ENCODE measurements at regions of chr11 and their contacts with region 1.

Region 1: GRCh38 chr11:4636962-4637661 is at the start of gene OR51D1:
- DNase-seq: no peak
- H3K4me3 ChIP-seq: no peak within 1 kb of the TSS
- H3K27me3 ChIP-seq: no peaks in the 10 kb centered on the region
- CTCF ChIP-seq: peak; percentile 89
- polyA plus RNA-seq, gene OR51D1: not detected in 2 replicates

Region 2: DNA sequence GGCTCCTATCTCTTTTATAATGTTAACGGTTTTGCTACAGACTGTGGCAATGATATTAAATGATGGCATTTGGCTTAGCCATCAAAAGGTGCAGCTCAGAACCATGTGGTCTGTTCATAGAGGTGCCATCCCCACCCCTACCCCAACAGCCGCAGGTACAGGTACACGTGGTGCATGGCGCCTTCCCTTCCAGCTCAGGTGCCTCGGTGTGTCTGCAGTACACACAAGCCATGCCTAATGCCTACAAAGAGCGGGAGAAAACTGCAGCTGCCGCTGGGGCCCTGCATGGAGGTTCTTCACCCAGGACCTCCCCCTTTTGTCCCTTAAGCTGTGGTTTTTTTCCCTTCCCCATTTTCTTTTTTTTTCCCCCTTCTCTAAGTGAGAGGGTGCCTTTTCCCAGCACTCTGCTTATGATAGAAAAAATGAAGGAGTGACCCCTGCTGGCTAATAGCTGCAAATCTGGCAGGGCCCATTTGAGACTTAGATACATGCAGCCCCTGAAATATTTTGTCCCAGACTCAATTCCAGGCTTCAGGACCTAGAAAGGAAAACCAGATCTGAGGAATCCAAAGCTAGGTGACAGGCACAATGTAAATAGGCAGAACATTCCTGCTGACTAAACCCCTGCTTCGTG is 85.6 kb before region 1 on chr11:
- CTCF ChIA-PET with region 1: no interaction called
- POLR2A ChIA-PET with region 1: no interaction called
- DNase-seq: no peak
- H3K4me3 ChIP-seq: no peak overlapping the region
- H3K27me3 ChIP-seq: no peaks in the 10 kb centered on the region
- CTCF ChIP-seq: peak; percentile 39

Region 3: DNA sequence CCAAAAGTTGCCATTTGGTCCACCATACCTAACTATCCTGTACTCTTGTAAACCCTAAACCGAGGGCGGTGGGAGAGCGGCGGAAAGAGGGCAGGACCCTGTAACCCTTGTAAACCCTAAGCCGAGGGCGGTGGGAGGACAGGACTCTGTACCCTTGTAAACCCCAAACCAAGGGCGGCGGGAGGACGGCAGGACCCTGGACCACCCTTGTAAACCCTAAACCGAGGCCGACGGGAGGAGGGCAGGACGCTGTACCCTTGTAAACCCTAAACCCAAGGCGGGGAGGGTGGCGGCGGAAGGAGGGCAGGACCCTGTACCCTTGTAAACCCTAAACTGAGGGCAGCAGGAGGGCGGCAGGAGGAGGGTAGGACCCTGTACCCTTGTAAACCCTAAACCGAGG is 68.0 kb before region 1 on chr11:
- CTCF ChIA-PET with region 1: no interaction called
- POLR2A ChIA-PET with region 1: no interaction called
- DNase-seq: no peak
- H3K4me3 ChIP-seq: no peak overlapping the region
- H3K27me3 ChIP-seq: no peaks in the 10 kb centered on the region
- CTCF ChIP-seq: no peak

Region 4: GRCh38 chr11:4607781-4608666 is 29.1 kb before region 1 on chr11 and contains the start of gene TRIM68:
- CTCF ChIA-PET with region 1: interaction called, 16 read pairs
- POLR2A ChIA-PET with region 1: no interaction called
- DNase-seq: peak; percentile 75
- H3K4me3 ChIP-seq: peak within 1 kb of the TSS; percentile 61
- H3K27me3 ChIP-seq: no peaks in the 10 kb centered on the region; the same call in 1 of the 2 replicates
- CTCF ChIP-seq: no peak
- polyA plus RNA-seq, gene TRIM68: 6.2 and 6.5 TPM in 2 replicates

Region 5: GRCh38 chr11:4626207-4627099 is 10.7 kb before region 1 on chr11:
- CTCF ChIA-PET with region 1: interaction called, 31 read pairs
- POLR2A ChIA-PET with region 1: no interaction called
- DNase-seq: no peak
- H3K4me3 ChIP-seq: no peak overlapping the region
- H3K27me3 ChIP-seq: no peaks in the 10 kb centered on the region; the same call in none of the 2 replicates
- CTCF ChIP-seq: peak; percentile 57

Region 6: GRCh38 chr11:4647766-4648165 is 10.7 kb after region 1 on chr11:
- CTCF ChIA-PET with region 1: interaction called, 24 read pairs
- POLR2A ChIA-PET with region 1: no interaction called
- DNase-seq: no peak
- H3K4me3 ChIP-seq: no peak overlapping the region
- H3K27me3 ChIP-seq: no peaks in the 10 kb centered on the region
- CTCF ChIP-seq: no peak

Region 7: GRCh38 chr11:4682623-4683419 is 45.7 kb after region 1 on chr11:
- CTCF ChIA-PET with region 1: no interaction called
- POLR2A ChIA-PET with region 1: no interaction called
- DNase-seq: no peak
- H3K4me3 ChIP-seq: no peak overlapping the region
- H3K27me3 ChIP-seq: no peaks in the 10 kb centered on the region
- CTCF ChIP-seq: no peak

Region 8: GRCh38 chr11:4994551-4994950 is 357.4 kb after region 1 on chr11 and contains the start of gene OR51L1:
- CTCF ChIA-PET with region 1: interaction called, 14 read pairs
- POLR2A ChIA-PET with region 1: no interaction called
- DNase-seq: no peak
- H3K4me3 ChIP-seq: no peak within 1 kb of the TSS
- H3K27me3 ChIP-seq: no peaks in the 10 kb centered on the region
- CTCF ChIP-seq: no peak
- polyA plus RNA-seq, gene OR51L1: not detected in 2 replicates

Region 9: DNA sequence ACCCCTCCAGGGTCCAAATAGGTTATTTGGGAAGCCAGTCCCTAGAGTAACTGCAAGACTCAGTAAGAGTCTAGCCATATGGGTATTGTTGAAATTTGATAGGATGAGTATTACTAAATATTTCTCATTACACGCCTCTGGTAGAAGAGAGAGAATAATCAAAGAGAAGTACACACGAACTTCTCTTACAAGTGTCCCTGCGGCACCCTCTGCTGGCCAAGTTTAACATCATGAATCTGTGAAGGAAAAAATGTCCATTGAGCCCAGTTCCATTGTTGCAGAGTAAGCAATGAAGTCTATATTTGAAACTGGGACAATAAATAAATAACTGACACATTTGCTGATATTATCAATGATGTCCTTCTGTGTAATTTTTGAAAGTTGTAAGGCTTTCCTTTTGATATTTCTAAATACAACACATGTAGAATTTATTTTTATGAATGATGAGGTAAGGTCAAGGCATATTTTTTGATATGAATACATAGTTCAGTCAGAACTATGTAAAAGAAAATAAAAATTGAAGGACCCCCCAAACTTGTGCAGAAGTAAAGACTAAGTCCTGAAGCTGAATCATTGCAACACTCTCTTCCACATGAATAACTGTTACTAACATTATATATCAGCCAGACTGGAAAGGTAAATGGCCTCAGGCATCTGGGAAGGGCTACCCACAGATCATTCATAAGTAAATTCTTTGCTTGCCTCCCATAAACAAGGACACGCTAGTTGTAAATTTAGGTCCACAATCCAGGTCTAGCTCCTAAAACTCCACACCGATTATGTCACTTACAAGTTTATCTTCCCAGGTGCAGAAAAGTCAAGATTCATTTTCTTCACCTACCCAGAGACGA is 367.5 kb after region 1 on chr11:
- CTCF ChIA-PET with region 1: interaction called, 19 read pairs
- POLR2A ChIA-PET with region 1: no interaction called
- DNase-seq: peak; percentile 1
- H3K4me3 ChIP-seq: no peak overlapping the region
- H3K27me3 ChIP-seq: no peaks in the 10 kb centered on the region
- CTCF ChIP-seq: peak; percentile 63

Measured in BJ (cell line).